ENCODE measurements at regions of chr3 and their contacts with region 1.

Region 1: GRCh38 chr3:102529452-102529851 is 94.6 kb downstream of the ZPLD1 start:
- DNase-seq: no peak
- ATAC-seq: peak; percentile 62; the same call in 2 of the 3 replicates
- H3K4me3 ChIP-seq: no peak overlapping the region
- H3K27ac ChIP-seq: no peak overlapping the region
- H3K4me1 ChIP-seq: no peaks in the 10 kb centered on the region
- H3K27me3 ChIP-seq: no peaks in the 10 kb centered on the region
- CTCF ChIP-seq: 0 out of 2 replicates have a peak, but pooled peaks have one; percentile 19
- EP300 ChIP-seq: no peak
- POLR2A ChIP-seq: no peak
- RAD21 ChIP-seq: no peak

Region 2: DNA sequence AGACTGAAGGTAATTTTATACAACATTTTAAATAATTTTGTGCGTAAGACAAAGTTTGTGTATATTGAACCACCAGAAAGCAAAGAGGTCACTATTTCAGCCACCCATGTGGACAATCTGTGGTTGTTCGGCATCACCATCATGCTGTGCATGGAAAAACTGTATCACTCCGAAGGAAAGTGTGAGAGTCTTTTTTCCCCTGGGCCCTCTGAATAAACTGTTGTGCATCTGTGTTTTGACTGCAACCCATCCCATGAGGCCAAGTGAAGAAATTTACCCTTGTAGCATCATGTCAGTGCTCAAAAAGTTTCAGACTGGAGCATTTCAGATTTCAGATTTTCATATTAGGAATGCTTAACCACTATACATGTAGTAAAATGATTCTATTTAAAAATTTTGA is 1294.4 kb before region 1 on chr3:
- CTCF ChIA-PET with region 1: no interaction called
- POLR2A ChIA-PET with region 1: no interaction called
- in situ Hi-C with region 1: no loop called
- intact Hi-C with region 1: no loop called
- DNase-seq: no peak
- ATAC-seq: no peak
- H3K4me3 ChIP-seq: no peak overlapping the region
- H3K27ac ChIP-seq: no peak overlapping the region
- H3K4me1 ChIP-seq: no peaks in the 10 kb centered on the region
- H3K27me3 ChIP-seq: no peaks in the 10 kb centered on the region
- CTCF ChIP-seq: no peak
- EP300 ChIP-seq: no peak
- POLR2A ChIP-seq: no peak
- RAD21 ChIP-seq: no peak

Region 3: DNA sequence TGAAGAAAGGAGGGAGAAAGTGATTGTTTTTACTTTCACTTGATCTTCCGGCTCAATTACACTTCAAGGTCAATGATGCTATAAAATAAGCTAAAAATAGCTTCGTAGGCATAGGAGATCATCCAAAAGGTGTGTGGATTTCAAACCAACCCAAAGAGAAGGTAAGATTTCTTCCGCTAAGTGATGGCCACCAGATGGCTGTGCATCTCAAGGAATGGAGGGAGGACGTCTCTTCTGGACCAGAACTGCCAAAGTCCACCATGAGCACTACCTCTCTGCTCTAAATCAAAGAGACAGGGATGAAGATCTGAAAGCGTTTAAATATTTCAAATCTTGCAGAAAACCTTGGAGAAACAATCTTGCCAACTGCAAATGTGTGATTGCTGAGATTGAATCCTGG is 293.8 kb before region 1 on chr3:
- CTCF ChIA-PET with region 1: no interaction called
- POLR2A ChIA-PET with region 1: no interaction called
- in situ Hi-C with region 1: loop called (anchors 5 kb)
- intact Hi-C with region 1: no loop called
- DNase-seq: peak; percentile 11
- ATAC-seq: peak; percentile 72
- H3K4me3 ChIP-seq: no peak overlapping the region
- H3K27ac ChIP-seq: no peak overlapping the region
- H3K4me1 ChIP-seq: no peaks in the 10 kb centered on the region
- H3K27me3 ChIP-seq: no peaks in the 10 kb centered on the region
- CTCF ChIP-seq: peak; percentile 73
- EP300 ChIP-seq: no peak
- POLR2A ChIP-seq: no peak
- RAD21 ChIP-seq: no peak